ENCODE measurements at regions of chr4 and their contacts with region 1.

Region 1: DNA sequence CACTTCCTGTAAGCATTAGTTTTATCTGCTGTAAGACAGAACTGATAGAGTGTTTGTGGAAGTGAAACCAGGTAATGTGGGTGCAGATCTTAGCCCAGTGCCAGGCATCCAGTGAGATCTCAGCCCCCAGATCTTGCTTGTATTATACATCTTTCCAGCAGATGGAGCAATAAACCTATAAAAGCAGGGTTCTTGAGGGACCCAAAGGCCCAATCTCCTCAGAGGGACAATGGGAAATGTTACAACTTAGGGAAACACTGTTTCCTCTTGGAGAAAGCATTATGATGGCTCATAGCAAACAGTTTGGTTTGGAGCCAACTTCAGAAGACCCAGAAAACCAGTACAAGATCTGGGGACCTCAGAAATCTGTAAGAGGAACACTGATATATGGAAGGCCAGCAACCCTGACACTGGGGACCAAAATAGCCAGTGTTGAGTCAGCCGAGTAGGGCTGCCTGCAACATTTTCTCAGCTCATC is 206.3 kb downstream of the SLC7A11 start:
- DNase-seq: peak; percentile 28
- H3K4me3 Mint-ChIP-seq: no peak overlapping the region
- H3K27ac Mint-ChIP-seq: peak overlapping the region; percentile 52
- H3K4me1 Mint-ChIP-seq: peaks cover 10% of the 10 kb centered on the region
- H3K27me3 Mint-ChIP-seq: no peaks in the 10 kb centered on the region
- CTCF ChIP-seq: peak; percentile 56

Region 2: GRCh38 chr4:137892134-137892533 is 143.7 kb before region 1 on chr4:
- CTCF ChIA-PET with region 1: interaction called, 14 read pairs
- intact Hi-C with region 1: no loop called
- DNase-seq: no peak
- H3K4me3 Mint-ChIP-seq: no peak overlapping the region
- H3K27ac Mint-ChIP-seq: no peak overlapping the region
- H3K4me1 Mint-ChIP-seq: no peaks in the 10 kb centered on the region
- H3K27me3 Mint-ChIP-seq: no peaks in the 10 kb centered on the region
- CTCF ChIP-seq: no peak

Region 3: GRCh38 chr4:138158746-138159297 is 123.0 kb after region 1 on chr4:
- CTCF ChIA-PET with region 1: no interaction called
- intact Hi-C with region 1: no loop called
- DNase-seq: no peak
- H3K4me3 Mint-ChIP-seq: no peak overlapping the region
- H3K27ac Mint-ChIP-seq: peak overlapping the region; percentile 54
- H3K4me1 Mint-ChIP-seq: peaks cover 10% of the 10 kb centered on the region
- H3K27me3 Mint-ChIP-seq: no peaks in the 10 kb centered on the region
- CTCF ChIP-seq: no peak

Region 4: GRCh38 chr4:138174981-138175794 is 139.4 kb after region 1 on chr4:
- CTCF ChIA-PET with region 1: no interaction called
- intact Hi-C with region 1: loop called (anchors 2 kb)
- DNase-seq: no peak
- H3K4me3 Mint-ChIP-seq: no peak overlapping the region
- H3K27ac Mint-ChIP-seq: no peak overlapping the region
- H3K4me1 Mint-ChIP-seq: peaks cover 20% of the 10 kb centered on the region
- H3K27me3 Mint-ChIP-seq: no peaks in the 10 kb centered on the region
- CTCF ChIP-seq: no peak

Region 5: GRCh38 chr4:138235419-138235952 is 199.7 kb after region 1 on chr4:
- CTCF ChIA-PET with region 1: no interaction called
- intact Hi-C with region 1: no loop called
- DNase-seq: no peak
- H3K4me3 Mint-ChIP-seq: peak overlapping the region; percentile 41
- H3K27ac Mint-ChIP-seq: peak overlapping the region; percentile 92
- H3K4me1 Mint-ChIP-seq: peaks cover 10% of the 10 kb centered on the region
- H3K27me3 Mint-ChIP-seq: no peaks in the 10 kb centered on the region
- CTCF ChIP-seq: no peak

Region 6: GRCh38 chr4:138494931-138495330 is 459.1 kb after region 1 on chr4:
- CTCF ChIA-PET with region 1: interaction called, 3 read pairs
- intact Hi-C with region 1: loop called (anchors 5 kb)
- DNase-seq: peak; percentile 71
- H3K4me3 Mint-ChIP-seq: no peak overlapping the region
- H3K27ac Mint-ChIP-seq: no peak overlapping the region
- H3K4me1 Mint-ChIP-seq: peaks cover 18% of the 10 kb centered on the region
- H3K27me3 Mint-ChIP-seq: no peaks in the 10 kb centered on the region
- CTCF ChIP-seq: peak; percentile 23

Region 7: GRCh38 chr4:138680989-138681604 is 645.3 kb after region 1 on chr4:
- CTCF ChIA-PET with region 1: no interaction called
- intact Hi-C with region 1: loop called (anchors 5 kb)
- DNase-seq: peak; percentile 71
- H3K4me3 Mint-ChIP-seq: no peak overlapping the region
- H3K27ac Mint-ChIP-seq: no peak overlapping the region
- H3K4me1 Mint-ChIP-seq: peaks cover 23% of the 10 kb centered on the region
- H3K27me3 Mint-ChIP-seq: no peaks in the 10 kb centered on the region
- CTCF ChIP-seq: peak; percentile 77

Measured in Calu3 (cell line).